WTC11 (cell line): ENCODE measurements at regions of chr6 and their contacts with region 1.

Region 1: DNA sequence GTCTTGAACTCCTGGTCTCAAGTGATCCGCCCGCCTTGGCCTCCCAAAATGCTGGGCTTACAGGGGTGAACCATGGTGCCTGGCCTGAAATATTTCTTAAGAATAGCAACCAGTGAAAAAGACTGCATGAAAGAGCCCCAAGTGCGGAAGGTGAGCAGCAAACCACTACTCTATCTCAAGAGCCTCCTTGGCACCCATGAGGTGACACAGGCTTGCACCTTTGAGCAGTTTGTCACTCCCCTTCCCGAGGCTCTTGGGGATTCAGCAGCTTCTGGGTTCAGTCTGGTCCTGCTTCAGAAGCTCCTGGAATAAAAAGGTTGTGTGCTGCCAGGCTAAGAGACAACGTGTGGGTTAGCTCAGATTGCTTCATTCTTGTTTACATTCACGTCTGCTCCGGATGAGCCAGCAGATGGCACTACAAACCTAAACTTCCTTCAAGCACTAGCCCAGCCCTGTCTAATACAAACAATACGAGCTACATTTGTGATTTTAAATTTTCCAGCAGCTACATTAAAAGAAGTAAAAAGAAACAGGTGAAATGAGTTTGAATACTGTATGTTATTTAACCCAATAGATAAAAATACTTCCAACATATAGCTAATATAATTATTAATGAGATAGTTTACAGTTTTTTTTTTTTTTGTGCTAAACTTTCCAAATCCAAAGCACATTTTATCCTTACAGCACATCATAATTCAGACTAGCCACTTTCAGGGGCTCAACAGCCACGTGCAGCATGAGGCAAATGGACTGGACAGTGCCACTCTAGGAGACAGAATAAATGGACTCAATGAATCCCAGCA is 46.2 kb downstream of the GJA10 start:
- DNase-seq: peak; percentile 63
- ATAC-seq: peak; percentile 97
- H3K4me3 Mint-ChIP-seq: no peak overlapping the region
- H3K27ac Mint-ChIP-seq: no peak overlapping the region
- H3K4me1 Mint-ChIP-seq: no peaks in the 10 kb centered on the region
- H3K27me3 Mint-ChIP-seq: no peaks in the 10 kb centered on the region
- CTCF ChIP-seq: peak; percentile 14; the same call in 1 of the 2 replicates

Region 2: GRCh38 chr6:89921691-89922090 is 18.7 kb before region 1 on chr6:
- CTCF ChIA-PET with region 1: interaction called, 16 read pairs
- POLR2A ChIA-PET with region 1: no interaction called
- DNase-seq: no peak
- ATAC-seq: no peak
- H3K4me3 Mint-ChIP-seq: no peak overlapping the region
- H3K27ac Mint-ChIP-seq: no peak overlapping the region
- H3K4me1 Mint-ChIP-seq: peaks cover 3% of the 10 kb centered on the region; the same call in 1 of the 2 replicates
- H3K27me3 Mint-ChIP-seq: no peaks in the 10 kb centered on the region
- CTCF ChIP-seq: no peak

Region 3: DNA sequence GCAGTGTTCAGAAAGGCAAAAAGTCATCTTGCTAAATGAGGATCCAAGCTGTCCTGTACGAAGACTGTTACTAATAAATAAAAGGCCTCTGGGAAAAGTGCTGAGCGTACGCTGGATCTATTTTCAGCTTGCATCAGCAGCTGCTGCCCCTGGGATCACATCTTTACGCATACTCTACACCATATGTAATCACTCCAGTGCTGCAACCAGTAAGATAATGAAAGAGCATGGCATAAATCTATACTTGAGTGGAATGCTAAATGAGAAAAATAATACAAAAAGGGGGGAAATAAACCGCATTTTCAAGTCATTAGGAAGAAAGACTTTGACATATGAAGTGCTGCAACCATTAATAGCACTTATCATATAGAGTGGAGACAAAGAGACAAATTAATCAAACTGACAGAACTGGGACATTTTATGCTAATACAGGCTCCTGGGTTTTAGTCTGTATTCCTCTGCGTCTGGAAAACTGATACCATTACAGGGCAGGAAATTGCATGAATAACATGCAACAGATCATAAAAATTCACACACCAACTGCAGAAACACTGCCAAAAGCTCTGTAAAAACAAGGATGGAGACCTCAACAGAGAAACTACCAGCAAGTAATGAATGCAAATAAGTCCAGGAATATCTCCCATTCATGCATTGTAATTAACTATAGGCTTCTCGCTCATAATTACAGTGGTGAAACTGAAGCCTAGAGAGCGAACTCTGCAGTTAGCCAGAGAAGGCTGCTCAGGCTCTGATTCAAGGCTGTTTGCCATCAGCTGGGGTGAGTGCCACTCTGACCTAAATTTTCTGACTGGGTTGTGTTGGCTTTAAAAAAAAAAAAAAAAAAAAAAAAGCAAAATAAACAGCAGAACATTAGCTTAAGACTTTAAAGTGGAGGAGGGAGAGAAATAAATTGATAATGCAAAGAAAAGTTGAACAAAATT is 37.7 kb after region 1 on chr6:
- CTCF ChIA-PET with region 1: interaction called, 14 read pairs
- POLR2A ChIA-PET with region 1: no interaction called
- DNase-seq: no peak
- ATAC-seq: no peak
- H3K4me3 Mint-ChIP-seq: no peak overlapping the region
- H3K27ac Mint-ChIP-seq: no peak overlapping the region
- H3K4me1 Mint-ChIP-seq: 0 out of 2 replicates have a peak, but pooled peaks cover 3% of the 10 kb centered on the region
- H3K27me3 Mint-ChIP-seq: no peaks in the 10 kb centered on the region
- CTCF ChIP-seq: no peak

Region 4: DNA sequence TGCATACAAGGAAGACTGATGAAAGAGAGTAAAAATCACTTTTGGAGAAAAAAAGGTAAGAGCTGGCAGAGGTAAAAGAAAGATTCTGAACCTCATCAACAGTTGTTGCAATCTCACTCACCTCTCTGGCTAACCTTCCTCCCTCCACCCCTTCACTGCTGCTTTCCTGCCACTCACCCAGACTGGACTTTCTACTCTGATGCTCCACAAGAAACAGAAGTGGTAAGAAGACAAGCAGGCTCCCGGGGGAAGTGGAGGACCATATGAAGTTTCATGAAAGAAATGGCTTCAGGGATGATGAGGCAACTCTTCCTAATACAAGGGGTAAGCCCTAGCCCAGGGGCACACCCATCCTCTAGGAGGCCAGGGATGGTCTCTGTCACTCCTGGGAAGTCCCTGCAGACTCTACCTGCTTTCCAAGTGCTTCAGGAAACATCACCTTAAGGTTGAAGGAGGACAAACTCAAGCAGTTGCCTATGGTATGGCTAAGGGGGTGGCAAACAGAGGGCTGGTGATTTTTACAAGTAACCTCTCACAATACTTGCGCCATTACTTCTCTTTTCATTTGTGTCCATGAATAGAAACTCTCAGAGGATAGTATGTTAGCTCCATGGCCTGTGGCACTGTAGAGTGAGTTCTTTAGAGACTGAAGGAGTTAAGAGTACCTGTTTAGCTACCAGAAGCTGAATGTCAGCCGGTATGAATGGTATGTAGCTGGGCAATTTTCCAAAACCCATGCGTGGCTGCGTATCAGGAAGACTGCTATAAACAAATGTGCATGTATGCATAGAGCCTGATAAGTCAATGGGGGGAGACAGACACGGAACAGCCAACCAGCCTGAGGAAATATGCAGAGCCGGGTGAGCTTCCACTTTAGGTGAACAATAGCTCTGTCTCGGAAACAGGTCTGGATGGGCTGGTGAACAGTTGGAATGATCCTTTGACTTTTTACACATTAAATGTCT is 244.2 kb after region 1 on chr6:
- CTCF ChIA-PET with region 1: interaction called, 31 read pairs
- POLR2A ChIA-PET with region 1: no interaction called
- DNase-seq: no peak
- ATAC-seq: no peak
- H3K4me3 Mint-ChIP-seq: no peak overlapping the region
- H3K27ac Mint-ChIP-seq: no peak overlapping the region
- H3K4me1 Mint-ChIP-seq: peaks cover 13% of the 10 kb centered on the region
- H3K27me3 Mint-ChIP-seq: no peaks in the 10 kb centered on the region
- CTCF ChIP-seq: no peak

Region 5: DNA sequence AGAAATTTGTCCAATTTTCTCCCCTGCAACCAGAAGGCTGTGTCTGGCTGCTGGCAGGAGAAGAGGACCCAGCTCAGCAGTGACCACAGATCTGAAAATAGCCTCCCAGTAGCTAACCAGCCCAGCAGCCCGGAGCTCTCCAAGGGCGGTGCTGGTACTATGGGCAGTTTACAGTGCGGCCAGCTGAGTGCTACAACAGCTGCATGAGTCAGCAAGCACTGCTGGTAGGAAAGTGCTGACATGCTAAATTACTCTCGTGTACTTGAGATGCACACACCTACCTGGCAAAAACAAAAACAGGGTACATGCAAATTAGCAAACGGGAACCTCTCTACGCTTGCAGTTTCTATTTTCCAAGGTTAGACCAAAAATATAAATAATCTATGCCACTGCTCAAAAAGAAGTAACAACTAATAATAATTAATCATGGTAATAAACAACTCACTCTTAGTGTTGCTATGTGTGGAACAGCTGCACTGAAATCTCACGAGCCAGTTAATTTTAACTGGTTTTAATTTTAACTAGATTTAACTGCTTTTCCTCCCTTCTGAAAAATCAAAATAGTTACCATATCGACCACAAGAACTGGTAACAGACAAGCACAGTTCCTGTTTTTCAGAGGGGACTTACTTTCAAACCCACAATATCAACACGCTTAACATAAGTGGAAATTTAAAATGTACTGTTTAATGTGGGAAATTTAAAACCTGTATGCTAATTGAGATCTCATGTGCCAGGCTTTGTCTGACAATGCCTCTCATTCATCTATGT is 345.4 kb after region 1 on chr6:
- CTCF ChIA-PET with region 1: interaction called, 50 read pairs
- POLR2A ChIA-PET with region 1: no interaction called
- DNase-seq: peak; percentile 62
- ATAC-seq: peak; percentile 75
- H3K4me3 Mint-ChIP-seq: peak overlapping the region; percentile 24; the same call in 1 of the 2 replicates
- H3K27ac Mint-ChIP-seq: peak overlapping the region; percentile 3; the same call in 1 of the 2 replicates
- H3K4me1 Mint-ChIP-seq: peaks cover 45% of the 10 kb centered on the region
- H3K27me3 Mint-ChIP-seq: no peaks in the 10 kb centered on the region
- CTCF ChIP-seq: no peak

Region 6: GRCh38 chr6:90434094-90434493 is 493.7 kb after region 1 on chr6:
- CTCF ChIA-PET with region 1: interaction called, 12 read pairs
- POLR2A ChIA-PET with region 1: no interaction called
- DNase-seq: peak; percentile 28
- ATAC-seq: peak; percentile 77
- H3K4me3 Mint-ChIP-seq: no peak overlapping the region
- H3K27ac Mint-ChIP-seq: no peak overlapping the region
- H3K4me1 Mint-ChIP-seq: peaks cover 50% of the 10 kb centered on the region
- H3K27me3 Mint-ChIP-seq: peaks cover 6% of the 10 kb centered on the region
- CTCF ChIP-seq: peak; percentile 22; the same call in 1 of the 2 replicates

Region 7: DNA sequence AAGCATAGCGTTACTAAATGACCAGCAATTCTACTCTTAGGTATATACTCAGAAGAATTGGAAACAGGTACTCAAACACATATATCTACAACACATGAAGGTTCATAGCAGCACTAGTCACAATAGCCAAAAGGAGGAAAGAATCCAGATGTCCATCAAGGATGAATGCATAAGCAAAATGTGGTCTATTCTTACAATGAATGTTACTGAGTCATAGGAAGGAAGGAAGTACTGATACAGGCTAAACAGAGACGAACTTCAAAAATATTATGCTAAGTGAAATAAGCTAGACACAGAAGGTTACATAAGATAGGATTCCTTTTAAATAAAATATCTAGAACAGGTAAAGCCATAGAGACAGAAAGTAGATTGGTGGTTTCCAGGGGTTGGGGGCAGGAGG is 552.9 kb after region 1 on chr6:
- CTCF ChIA-PET with region 1: interaction called, 13 read pairs
- POLR2A ChIA-PET with region 1: no interaction called
- DNase-seq: no peak
- ATAC-seq: no peak
- H3K4me3 Mint-ChIP-seq: no peak overlapping the region
- H3K27ac Mint-ChIP-seq: peak overlapping the region; percentile 93
- H3K4me1 Mint-ChIP-seq: peaks cover 61% of the 10 kb centered on the region
- H3K27me3 Mint-ChIP-seq: no peaks in the 10 kb centered on the region
- CTCF ChIP-seq: no peak